ENCODE measurements at regions of chrX and their contacts with region 1.

Region 1: DNA sequence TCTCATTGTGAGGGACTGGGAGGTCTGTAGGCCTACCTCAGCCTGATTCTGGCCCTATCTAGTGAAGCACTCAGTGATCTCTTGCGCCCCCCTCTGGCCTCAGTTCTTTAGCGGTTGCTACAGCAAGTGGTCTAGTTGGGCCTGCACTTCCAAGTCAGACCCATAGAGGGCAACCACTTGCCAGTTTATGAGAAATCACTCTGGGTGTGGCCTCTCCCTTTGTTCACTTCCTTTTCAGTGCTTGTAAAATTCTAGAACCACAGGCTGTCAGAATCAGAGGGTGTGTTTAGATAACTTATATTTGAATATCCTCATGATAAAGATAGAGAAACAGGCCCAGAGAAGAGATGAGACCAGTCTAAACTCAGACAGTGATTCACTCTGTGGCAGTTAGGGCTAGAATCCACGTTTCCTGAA is 60.9 kb upstream of the LAS1L start:
- DNase-seq: peak; percentile 64 to 84
- ATAC-seq: peak; percentile 93 to 95
- H3K4me3 ChIP-seq: no peak overlapping the region
- H3K27ac ChIP-seq: peak overlapping the region; percentile 63 to 77 (median 68)
- H3K4me1 ChIP-seq: peaks cover 6 to 7% of the 10 kb centered on the region in 2 donors
- H3K27me3 ChIP-seq: no peaks in the 10 kb centered on the region
- CTCF ChIP-seq: peak; percentile 90 to 96 (median 92)
- POLR2A ChIP-seq: no peak

Region 2: GRCh38 chrX:65196758-65197360 is 398.6 kb before region 1 on chrX:
- in situ Hi-C with region 1: no loop called
- intact Hi-C with region 1: no loop called
- DNase-seq: no peak
- ATAC-seq: no peak
- H3K4me3 ChIP-seq: no peak overlapping the region
- H3K27ac ChIP-seq: no peak overlapping the region
- H3K4me1 ChIP-seq: no peaks in the 10 kb centered on the region
- H3K27me3 ChIP-seq: no peaks in the 10 kb centered on the region
- CTCF ChIP-seq: no peak
- POLR2A ChIP-seq: no peak

Region 3: DNA sequence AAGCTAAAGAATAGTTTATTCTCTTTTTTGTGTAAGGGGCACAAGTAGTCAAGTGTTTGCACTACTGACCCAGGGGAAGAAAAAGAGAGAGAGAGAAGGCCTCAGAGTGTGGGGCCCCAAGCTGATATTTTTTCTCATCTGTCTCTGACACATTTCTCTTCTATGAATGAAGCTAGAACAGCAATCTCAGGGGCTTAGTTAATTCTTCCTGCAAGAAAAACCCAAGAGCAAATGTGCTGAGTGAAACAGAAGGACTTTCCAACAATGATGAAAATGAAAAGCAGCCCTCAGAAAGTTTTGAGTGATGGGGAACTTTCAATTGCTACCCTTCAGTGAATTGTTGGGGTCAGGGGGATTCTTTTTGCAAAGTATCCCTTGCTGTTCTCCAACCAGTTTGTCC is 62.8 kb after region 1 on chrX:
- in situ Hi-C with region 1: loop called in 1 of 4 experiments (anchors 10 kb)
- intact Hi-C with region 1: no loop called
- DNase-seq: no peak
- ATAC-seq: no peak
- H3K4me3 ChIP-seq: no peak overlapping the region
- H3K27ac ChIP-seq: no peak overlapping the region
- H3K4me1 ChIP-seq: no peaks in the 10 kb centered on the region
- H3K27me3 ChIP-seq: no peaks in the 10 kb centered on the region
- CTCF ChIP-seq: no peak
- POLR2A ChIP-seq: no peak

Region 4: DNA sequence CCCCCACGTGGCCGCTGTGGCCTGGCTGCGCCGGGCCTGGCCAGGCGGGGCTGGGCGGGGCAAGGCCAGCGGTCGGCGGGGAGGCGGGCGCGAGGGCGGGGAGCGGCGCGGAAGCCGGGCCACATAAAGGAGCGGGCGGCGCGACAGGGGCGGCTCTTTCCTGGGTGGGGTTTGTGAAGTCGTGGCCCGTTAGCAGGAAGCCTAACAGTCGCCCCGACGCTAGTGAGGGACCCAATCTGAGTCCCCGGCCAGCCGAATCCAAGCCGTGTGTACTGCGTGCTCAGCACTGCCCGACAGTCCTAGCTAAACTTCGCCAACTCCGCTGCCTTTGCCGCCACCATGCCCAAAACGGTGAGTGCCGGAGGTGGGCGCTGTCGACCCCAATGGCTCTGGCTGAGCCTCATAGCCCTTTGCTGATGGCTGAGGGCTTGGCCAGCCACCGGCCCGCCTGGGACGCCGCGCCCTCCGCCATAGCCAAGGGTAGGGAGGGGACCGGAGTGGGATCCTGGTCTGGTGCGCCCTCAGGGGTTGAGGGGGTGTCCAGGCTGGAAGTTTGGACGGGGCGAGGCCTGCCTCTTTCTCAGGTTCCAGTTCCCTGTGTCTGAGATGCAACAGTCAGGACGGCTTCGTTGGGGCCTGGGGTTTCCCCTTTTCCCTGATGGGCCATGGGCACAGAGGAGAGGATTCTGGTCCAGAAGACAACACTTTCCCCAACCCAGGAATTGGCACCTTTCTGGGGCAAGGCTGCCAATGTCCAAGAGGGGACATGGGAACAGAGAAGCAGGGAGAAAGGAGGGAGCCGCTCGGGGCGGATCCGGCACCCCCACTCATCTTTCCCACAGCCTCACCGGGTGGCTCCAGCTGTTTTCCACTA is 72.3 kb after region 1 on chrX and contains the start of gene MSN:
- in situ Hi-C with region 1: no loop called
- intact Hi-C with region 1: loop called (anchors 1 kb)
- DNase-seq: peak; percentile 60 to 66
- ATAC-seq: peak; percentile 75 to 83
- H3K4me3 ChIP-seq: peak within 1 kb of the TSS; percentile 71 to 82 (median 78)
- H3K27ac ChIP-seq: peak within 1 kb of the TSS; percentile 85 to 96 (median 95)
- H3K4me1 ChIP-seq: peaks cover 4 to 24% of the 10 kb centered on the region in 2 donors
- H3K27me3 ChIP-seq: no peaks in the 10 kb centered on the region
- CTCF ChIP-seq: peak in 1 of 5 experiments; percentile 17
- POLR2A ChIP-seq: peak; percentile 72 to 86
- total RNA-seq, gene MSN: 39.1 to 69.6 (median 59.6) TPM

Region 5: DNA sequence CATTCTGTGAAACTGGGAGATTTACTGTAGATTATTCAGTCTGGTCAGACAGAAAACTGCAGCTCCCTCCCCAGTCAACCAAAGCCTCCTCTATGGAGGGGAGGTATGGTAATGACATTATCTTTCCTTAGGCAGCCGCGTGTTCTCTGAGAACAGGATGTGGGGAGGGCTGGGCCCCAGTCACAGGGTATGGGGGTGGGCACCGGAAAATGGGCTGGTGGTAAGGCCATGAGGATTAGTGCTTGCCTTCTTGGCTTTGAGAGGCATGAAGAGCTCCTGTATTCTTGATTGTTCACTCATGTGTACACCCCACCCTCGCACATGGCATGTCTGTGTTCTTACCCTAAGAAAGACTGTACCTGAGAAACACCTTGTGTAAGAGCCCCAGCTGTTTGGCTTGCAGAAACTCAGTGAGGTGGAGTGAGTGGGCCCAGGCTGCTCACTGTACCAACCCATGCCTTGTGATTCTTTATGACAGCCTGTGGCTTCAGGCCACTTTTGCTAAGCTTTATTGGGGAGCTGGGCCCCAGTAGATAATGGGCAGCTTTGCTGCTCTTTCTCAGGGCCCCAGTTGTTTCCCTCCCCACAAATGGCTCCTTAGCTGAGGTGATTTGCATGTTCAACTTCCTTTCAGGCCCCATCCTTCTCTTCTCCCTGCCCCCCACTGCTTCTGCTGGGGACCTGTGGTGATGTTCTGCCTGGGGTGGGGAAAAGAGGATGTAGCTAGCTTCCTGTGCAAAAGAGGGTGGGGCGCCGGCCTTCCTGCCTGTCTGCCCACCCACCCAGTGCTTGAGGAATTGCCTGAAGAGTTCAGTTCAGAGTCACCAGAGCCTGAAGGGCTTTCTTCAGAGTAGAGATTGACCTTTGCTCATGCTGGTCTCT is 102.7 kb after region 1 on chrX:
- in situ Hi-C with region 1: loop called in 3 of 4 experiments (anchors 10 to 25 kb)
- intact Hi-C with region 1: no loop called
- DNase-seq: no peak
- ATAC-seq: peak; percentile 15 to 21
- H3K4me3 ChIP-seq: no peak overlapping the region
- H3K27ac ChIP-seq: peak overlapping the region; percentile 46 to 64 (median 62)
- H3K4me1 ChIP-seq: peaks cover 29 to 53% of the 10 kb centered on the region in 2 donors
- H3K27me3 ChIP-seq: no peaks in the 10 kb centered on the region
- CTCF ChIP-seq: no peak
- POLR2A ChIP-seq: peak in 1 of 2 donors; percentile 2

Region 6: DNA sequence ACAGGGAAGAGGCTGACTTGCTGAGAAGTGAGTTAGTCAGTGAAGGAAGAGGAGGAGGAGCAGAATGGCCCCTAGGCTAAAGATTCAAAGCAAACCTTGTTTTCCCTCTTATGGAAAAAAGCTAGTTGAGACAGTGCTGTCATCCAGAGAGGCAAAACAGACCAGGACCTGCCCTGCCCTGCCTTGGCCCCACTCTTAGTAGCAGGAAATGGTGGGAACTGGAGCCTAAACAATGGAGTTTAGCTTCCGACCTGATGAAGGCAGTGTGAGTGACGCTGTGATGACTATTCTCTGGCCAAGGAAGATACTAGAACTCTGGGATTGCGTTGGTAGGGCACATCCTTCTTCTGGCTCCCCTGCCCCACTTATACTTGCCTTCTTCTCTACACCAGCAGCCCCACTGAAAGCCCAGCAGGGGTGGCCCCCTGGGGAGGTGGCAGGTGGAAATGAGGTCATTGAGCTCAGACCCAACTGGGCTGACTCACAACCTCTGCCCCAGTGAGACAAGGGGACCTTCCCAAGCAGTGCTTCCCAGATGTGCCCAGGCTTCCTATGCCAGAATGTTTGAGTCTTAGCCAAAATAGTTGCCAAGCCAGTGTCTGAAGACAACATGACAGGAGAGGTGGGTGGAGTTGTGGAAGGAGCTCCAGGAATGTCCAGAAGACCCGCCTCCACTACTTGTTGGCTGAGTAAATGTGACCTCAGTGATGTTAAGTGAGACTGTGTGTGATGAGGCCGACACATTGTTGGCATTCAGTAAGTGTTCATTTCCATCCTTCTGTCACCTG is 110.8 kb after region 1 on chrX:
- in situ Hi-C with region 1: loop called in 2 of 4 experiments (anchors 10 to 25 kb)
- intact Hi-C with region 1: loop called (anchors 5 kb)
- DNase-seq: peak in 1 of 2 donors; percentile 9
- ATAC-seq: peak; percentile 45 to 51
- H3K4me3 ChIP-seq: no peak overlapping the region
- H3K27ac ChIP-seq: peak overlapping the region; percentile 59 to 70 (median 64)
- H3K4me1 ChIP-seq: peaks cover 29 to 35% of the 10 kb centered on the region in 2 donors
- H3K27me3 ChIP-seq: no peaks in the 10 kb centered on the region
- CTCF ChIP-seq: no peak
- POLR2A ChIP-seq: no peak

Region 7: GRCh38 chrX:65985922-65986588 is 390.6 kb after region 1 on chrX:
- in situ Hi-C with region 1: loop called in 2 of 4 experiments (anchors 25 kb)
- intact Hi-C with region 1: loop called (anchors 1 kb)
- DNase-seq: no peak
- ATAC-seq: peak; percentile 56 to 60
- H3K4me3 ChIP-seq: no peak overlapping the region
- H3K27ac ChIP-seq: no peak overlapping the region
- H3K4me1 ChIP-seq: no peaks in the 10 kb centered on the region
- H3K27me3 ChIP-seq: no peaks in the 10 kb centered on the region
- CTCF ChIP-seq: peak in 4 of 5 experiments; percentile 33 to 56 (median 42)
- POLR2A ChIP-seq: no peak

Region 8: DNA sequence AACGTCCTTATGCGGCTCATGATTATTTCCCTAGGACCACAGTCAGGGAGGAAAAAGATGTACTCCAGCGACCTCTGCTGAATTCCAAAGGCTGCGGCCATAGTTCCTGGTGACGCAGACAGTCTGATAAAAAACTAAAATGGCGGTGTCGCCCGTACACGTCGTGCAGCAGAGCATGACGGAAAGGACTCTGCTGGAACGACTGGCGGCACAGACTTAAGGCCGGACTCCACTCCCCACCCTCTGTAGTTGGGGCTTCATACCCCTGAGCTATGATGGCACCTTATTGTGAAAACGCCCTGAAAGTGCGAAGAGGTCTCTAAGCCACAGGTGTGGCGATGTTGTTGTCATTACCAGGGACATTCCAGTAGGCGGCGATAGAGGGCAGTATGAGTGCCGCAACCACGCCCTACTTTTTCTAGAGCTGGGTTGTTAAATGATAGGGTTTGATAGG is 1133.4 kb after region 1 on chrX:
- in situ Hi-C with region 1: loop called in 1 of 4 experiments (anchors 25 kb)
- intact Hi-C with region 1: no loop called
- DNase-seq: peak; percentile 2 to 12
- ATAC-seq: no peak
- H3K4me3 ChIP-seq: peak overlapping the region; percentile 28 to 44 (median 42)
- H3K27ac ChIP-seq: no peak overlapping the region
- H3K4me1 ChIP-seq: no peaks in the 10 kb centered on the region
- H3K27me3 ChIP-seq: no peaks in the 10 kb centered on the region
- CTCF ChIP-seq: peak in 4 of 5 experiments; percentile 7 to 56 (median 39)
- POLR2A ChIP-seq: no peak